ENCODE measurements at regions of chrX and their contacts with region 1.

Region 1: GRCh38 chrX:45621376-45622041 is 420.8 kb upstream of the DIPK2B start:
- DNase-seq: peak; percentile 54
- H3K4me3 ChIP-seq: no peak overlapping the region
- H3K27ac ChIP-seq: peak overlapping the region; percentile 75
- H3K4me1 ChIP-seq: peaks cover 22% of the 10 kb centered on the region
- H3K27me3 ChIP-seq: no peaks in the 10 kb centered on the region
- CTCF ChIP-seq: no peak
- POLR2A ChIP-seq: peak; percentile 30

Region 2: GRCh38 chrX:44035576-44035975 is 1585.9 kb before region 1 on chrX:
- CTCF ChIA-PET with region 1: no interaction called
- POLR2A ChIA-PET with region 1: interaction called, 15 read pairs
- dilution Hi-C with region 1: no loop called
- intact Hi-C with region 1: no loop called
- DNase-seq: no peak
- H3K4me3 ChIP-seq: no peak overlapping the region
- H3K27ac ChIP-seq: no peak overlapping the region
- H3K4me1 ChIP-seq: peaks cover 10% of the 10 kb centered on the region
- H3K27me3 ChIP-seq: no peaks in the 10 kb centered on the region
- CTCF ChIP-seq: no peak
- POLR2A ChIP-seq: no peak

Region 3: GRCh38 chrX:45660477-45660876 is 39.0 kb after region 1 on chrX:
- CTCF ChIA-PET with region 1: no interaction called
- POLR2A ChIA-PET with region 1: no interaction called
- dilution Hi-C with region 1: no loop called
- intact Hi-C with region 1: no loop called
- DNase-seq: no peak
- H3K4me3 ChIP-seq: no peak overlapping the region
- H3K27ac ChIP-seq: no peak overlapping the region
- H3K4me1 ChIP-seq: no peaks in the 10 kb centered on the region
- H3K27me3 ChIP-seq: no peaks in the 10 kb centered on the region
- CTCF ChIP-seq: no peak
- POLR2A ChIP-seq: no peak

Region 4: GRCh38 chrX:46803140-46803539 is 1181.6 kb after region 1 on chrX:
- CTCF ChIA-PET with region 1: no interaction called
- POLR2A ChIA-PET with region 1: no interaction called
- dilution Hi-C with region 1: no loop called
- intact Hi-C with region 1: no loop called
- DNase-seq: no peak
- H3K4me3 ChIP-seq: no peak overlapping the region
- H3K27ac ChIP-seq: no peak overlapping the region
- H3K4me1 ChIP-seq: no peaks in the 10 kb centered on the region
- H3K27me3 ChIP-seq: no peaks in the 10 kb centered on the region
- CTCF ChIP-seq: peak in 1 of 2 donors; percentile 20
- POLR2A ChIP-seq: no peak

Measured in endothelial cell of umbilical vein (primary cell).